PC-3 (cell line): ENCODE measurements at regions of chr10 and their contacts with region 1.

Region 1: DNA sequence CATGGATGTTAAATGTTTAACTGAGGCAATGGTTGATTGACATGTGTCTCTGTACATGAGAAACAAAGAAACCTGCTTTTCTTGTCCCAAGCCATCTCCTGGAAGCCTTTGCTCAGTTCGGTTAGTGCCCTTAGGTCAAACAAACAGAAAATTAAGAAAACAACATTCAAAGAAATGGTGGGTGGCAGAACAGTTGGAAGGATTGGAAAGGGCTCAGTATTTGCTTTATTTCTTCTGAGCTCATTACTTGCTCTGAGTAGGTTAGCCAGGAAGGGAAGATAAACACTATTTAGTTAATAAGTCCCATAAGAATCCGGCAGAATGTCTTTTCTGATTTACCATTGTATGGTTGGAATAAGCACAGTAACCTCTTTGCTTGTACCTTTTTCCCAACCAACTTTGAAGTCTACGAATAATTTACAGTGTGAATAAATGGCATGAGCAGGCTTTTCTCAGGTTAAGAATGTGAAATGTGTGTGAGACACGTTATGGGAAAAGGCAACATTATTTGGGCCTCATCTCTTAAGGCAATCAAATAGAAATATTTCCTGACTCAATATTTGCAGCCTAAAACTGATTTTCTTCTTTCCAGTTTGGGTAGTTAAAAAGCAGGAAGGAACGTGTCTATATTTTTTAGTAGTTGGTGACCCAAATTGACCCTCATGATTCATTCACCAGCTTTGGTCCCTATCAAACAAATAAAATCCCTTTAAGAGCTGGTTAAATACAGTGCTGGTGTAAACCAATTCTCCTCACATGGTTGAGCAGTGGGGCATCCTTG is 158.5 kb downstream of the DKK1 start:
- DNase-seq: peak; percentile 100
- ATAC-seq: peak; percentile 83
- H3K4me3 ChIP-seq: peak overlapping the region; percentile 38
- H3K27ac ChIP-seq: peak overlapping the region; percentile 85
- H3K4me1 ChIP-seq: peaks cover 63% of the 10 kb centered on the region
- H3K27me3 ChIP-seq: no peaks in the 10 kb centered on the region
- CTCF ChIP-seq: no peak

Region 2: GRCh38 chr10:52334595-52334994 is 138.0 kb before region 1 on chr10:
- CTCF ChIA-PET with region 1: no interaction called
- POLR2A ChIA-PET with region 1: no interaction called
- intact Hi-C with region 1: loop called (anchors 1 kb)
- DNase-seq: peak; percentile 93
- ATAC-seq: peak; percentile 53
- H3K4me3 ChIP-seq: 0 out of 2 replicates have a peak overlapping the region, but pooled peaks have one; percentile 0
- H3K27ac ChIP-seq: peak overlapping the region; percentile 74
- H3K4me1 ChIP-seq: peaks cover 52% of the 10 kb centered on the region
- H3K27me3 ChIP-seq: no peaks in the 10 kb centered on the region
- CTCF ChIP-seq: no peak

Region 3: DNA sequence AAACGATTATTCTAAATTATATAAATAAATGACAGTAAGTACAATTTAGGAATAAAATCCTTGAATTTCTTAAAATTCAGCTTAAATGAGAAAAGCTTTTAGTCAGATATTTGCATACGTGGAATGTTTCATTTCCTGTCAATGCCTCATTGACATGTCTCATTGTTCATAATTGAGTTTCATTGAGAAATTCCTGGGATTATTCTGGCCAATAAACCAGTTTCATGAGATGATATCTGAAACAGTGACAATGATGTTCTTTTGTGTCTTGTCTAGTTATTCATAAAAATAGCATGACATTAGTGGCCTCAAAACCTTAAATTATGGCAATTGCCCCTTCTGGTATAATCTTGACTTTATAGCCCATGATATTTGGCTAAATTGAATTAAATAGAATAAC is 62.6 kb before region 1 on chr10:
- CTCF ChIA-PET with region 1: no interaction called
- POLR2A ChIA-PET with region 1: no interaction called
- intact Hi-C with region 1: loop called (anchors 1 kb)
- DNase-seq: peak; percentile 67
- ATAC-seq: peak; percentile 25; the same call in 1 of the 2 replicates
- H3K4me3 ChIP-seq: no peak overlapping the region
- H3K27ac ChIP-seq: peak overlapping the region; percentile 31
- H3K4me1 ChIP-seq: peaks cover 20% of the 10 kb centered on the region
- H3K27me3 ChIP-seq: no peaks in the 10 kb centered on the region
- CTCF ChIP-seq: no peak

Region 4: DNA sequence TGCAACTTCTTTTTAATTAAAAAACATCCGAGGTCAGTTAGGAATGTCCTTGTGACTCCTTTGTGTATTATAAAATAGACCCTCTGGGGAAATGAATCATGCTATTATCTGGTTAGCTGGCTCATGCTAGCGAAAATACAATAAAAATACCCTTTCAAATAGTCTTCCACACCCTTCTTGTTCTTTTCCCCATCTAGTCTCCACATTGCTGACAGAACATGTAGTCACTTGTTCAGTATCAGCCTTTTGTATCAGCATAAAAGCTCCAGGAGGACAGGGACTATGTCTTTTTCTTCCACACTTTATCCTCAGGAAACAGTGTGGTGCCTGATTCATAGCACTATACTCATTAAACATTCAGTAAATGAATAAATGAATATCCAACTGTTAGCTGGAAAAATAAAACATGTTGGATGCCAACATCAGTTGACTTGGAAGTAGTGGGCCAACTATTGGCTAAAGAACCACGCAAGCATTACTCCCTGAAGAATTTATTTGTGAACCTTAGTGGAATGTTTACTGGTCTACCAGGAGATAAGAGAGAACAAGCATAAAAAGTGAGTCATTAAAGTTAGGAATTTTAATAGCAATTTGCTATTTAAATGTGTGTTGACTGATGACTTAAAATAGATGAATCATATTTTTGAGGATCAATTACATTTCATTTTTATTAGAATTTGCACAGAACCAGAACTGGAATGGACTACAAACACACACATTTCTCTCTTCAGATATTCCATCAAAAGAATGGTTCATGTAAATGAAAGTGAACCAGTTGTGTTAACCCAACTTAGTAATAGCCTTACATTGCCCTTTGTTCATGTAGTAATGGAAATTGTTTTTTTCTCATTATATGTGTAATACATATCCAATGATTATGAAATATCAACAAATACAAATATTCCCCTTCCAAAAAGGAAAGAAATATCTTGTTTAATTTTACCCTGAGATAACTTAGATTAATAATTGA is 28.9 kb before region 1 on chr10:
- CTCF ChIA-PET with region 1: no interaction called
- POLR2A ChIA-PET with region 1: interaction called, 3 read pairs
- intact Hi-C with region 1: loop called (anchors 1 kb)
- DNase-seq: peak; percentile 100
- ATAC-seq: peak; percentile 80
- H3K4me3 ChIP-seq: peak overlapping the region; percentile 36
- H3K27ac ChIP-seq: peak overlapping the region; percentile 82
- H3K4me1 ChIP-seq: peaks cover 62% of the 10 kb centered on the region
- H3K27me3 ChIP-seq: no peaks in the 10 kb centered on the region
- CTCF ChIP-seq: no peak

Region 5: GRCh38 chr10:52451817-52452216 is 20.7 kb before region 1 on chr10:
- CTCF ChIA-PET with region 1: no interaction called
- POLR2A ChIA-PET with region 1: no interaction called
- intact Hi-C with region 1: loop called (anchors 1 kb)
- DNase-seq: peak; percentile 100
- ATAC-seq: peak; percentile 65
- H3K4me3 ChIP-seq: peak overlapping the region; percentile 62
- H3K27ac ChIP-seq: peak overlapping the region; percentile 80
- H3K4me1 ChIP-seq: peaks cover 86% of the 10 kb centered on the region
- H3K27me3 ChIP-seq: no peaks in the 10 kb centered on the region
- CTCF ChIP-seq: no peak